Transverse colon (tissue), 4 donors: ENCODE measurements at regions of chrX and their contacts with region 1.

Region 1: DNA sequence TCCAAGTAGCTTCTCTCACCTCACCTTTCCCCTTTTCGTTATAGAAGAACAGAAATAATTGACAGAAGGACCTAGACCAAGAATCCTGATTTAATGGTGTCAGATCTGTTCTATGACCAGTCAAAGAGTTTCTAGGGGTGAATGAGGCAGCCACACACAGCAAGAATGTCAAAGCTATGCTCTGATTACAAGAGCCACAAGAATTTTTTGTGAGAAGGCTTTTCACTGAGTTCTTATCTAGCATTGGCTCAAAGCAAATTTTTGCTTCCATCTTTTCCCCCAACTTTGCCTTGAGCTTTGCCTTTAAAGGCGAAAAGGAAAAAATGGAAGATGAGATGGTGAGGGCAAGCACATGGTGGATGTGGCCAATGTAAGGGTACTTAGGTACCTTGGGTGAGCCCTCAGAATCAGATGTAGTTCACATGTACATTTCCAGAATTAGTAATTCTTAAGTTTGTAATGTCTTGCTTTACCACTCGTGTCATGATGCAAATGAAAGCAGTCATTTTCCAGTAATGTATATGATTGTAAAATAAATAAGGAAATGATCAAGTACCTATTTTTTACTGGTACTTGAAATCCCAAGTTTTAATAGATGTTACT is 23.5 kb downstream of the FMR1 start:
- DNase-seq: no peak
- H3K4me3 ChIP-seq: no peak overlapping the region
- H3K27ac ChIP-seq: no peak overlapping the region
- H3K4me1 ChIP-seq: no peaks in the 10 kb centered on the region
- H3K27me3 ChIP-seq: no peaks in the 10 kb centered on the region
- CTCF ChIP-seq: no peak
- EP300 ChIP-seq: no peak
- POLR2A ChIP-seq: no peak

Region 2: GRCh38 chrX:146994165-146994564 is 941.1 kb before region 1 on chrX:
- in situ Hi-C with region 1: no loop called
- intact Hi-C with region 1: loop called (anchors 5 kb)
- DNase-seq: no peak
- H3K4me3 ChIP-seq: no peak overlapping the region
- H3K27ac ChIP-seq: no peak overlapping the region
- H3K4me1 ChIP-seq: no peaks in the 10 kb centered on the region
- H3K27me3 ChIP-seq: no peaks in the 10 kb centered on the region
- CTCF ChIP-seq: no peak
- EP300 ChIP-seq: no peak
- POLR2A ChIP-seq: no peak

Region 3: GRCh38 chrX:147962476-147962875 is 27.2 kb after region 1 on chrX:
- in situ Hi-C with region 1: no loop called
- intact Hi-C with region 1: no loop called
- DNase-seq: no peak
- H3K4me3 ChIP-seq: no peak overlapping the region
- H3K27ac ChIP-seq: no peak overlapping the region
- H3K4me1 ChIP-seq: no peaks in the 10 kb centered on the region
- H3K27me3 ChIP-seq: no peaks in the 10 kb centered on the region
- CTCF ChIP-seq: no peak
- EP300 ChIP-seq: no peak
- POLR2A ChIP-seq: no peak